HepG2 (cell line): ENCODE measurements at regions of chr10 and their contacts with region 1.

Region 1: DNA sequence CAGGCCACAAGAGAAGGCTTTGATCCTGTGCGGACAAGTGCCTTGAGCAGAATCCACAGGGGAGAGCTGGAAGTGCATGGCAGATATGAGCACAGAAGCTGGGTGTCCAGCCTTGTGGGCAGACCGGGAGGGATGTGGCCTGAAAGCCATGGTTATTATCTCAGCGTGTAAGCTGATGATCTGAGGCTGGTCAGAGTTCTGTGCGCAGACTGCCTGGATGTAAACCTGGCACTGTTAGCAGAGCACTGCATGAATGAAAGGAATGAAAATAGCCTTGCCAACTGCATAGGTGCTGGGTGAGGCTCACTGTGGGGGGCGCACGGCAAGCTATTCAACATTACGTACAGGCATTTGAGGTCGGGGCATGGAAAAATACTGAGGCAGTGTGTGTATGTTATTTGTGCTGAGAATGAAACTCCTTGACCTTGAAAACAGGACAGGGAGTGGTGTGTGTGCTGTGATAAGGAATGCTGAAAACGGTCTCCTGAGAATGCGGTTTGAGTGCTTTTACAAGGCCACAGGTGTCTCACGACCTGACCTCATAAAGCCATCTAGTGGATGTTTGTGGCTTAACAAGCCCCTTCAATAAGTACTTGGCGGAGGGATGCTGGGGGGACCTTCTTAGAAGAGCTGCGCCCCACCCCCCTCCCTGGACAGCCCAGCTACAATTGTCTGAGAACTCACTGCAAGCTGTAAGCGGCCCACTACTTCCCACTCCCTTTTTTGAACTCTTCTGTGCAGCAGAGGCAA is 18.7 kb downstream of the AKR1C1 start:
- DNase-seq: peak; percentile 79
- ATAC-seq: peak; percentile 38
- H3K4me3 ChIP-seq: no peak overlapping the region
- H3K27ac ChIP-seq: peak overlapping the region; percentile 52
- H3K4me1 ChIP-seq: peaks cover 15% of the 10 kb centered on the region
- H3K27me3 ChIP-seq: no peaks in the 10 kb centered on the region
- CTCF ChIP-seq: peak; percentile 78
- EP300 ChIP-seq: peak in 1 of 2 experiments; percentile 23; a peak in 1 of 4 replicates
- POLR2A ChIP-seq: peak; percentile 67 to 88
- RAD21 ChIP-seq: peak; percentile 58; the same call in 1 of the 2 replicates

Region 2: GRCh38 chr10:4813023-4813422 is 168.9 kb before region 1 on chr10:
- CTCF ChIA-PET with region 1: interaction called, 10 read pairs
- POLR2A ChIA-PET with region 1: no interaction called
- in situ Hi-C with region 1: no loop called
- intact Hi-C with region 1: no loop called
- DNase-seq: peak; percentile 58
- ATAC-seq: peak; percentile 44; the same call in 2 of the 3 replicates
- H3K4me3 ChIP-seq: no peak overlapping the region
- H3K27ac ChIP-seq: no peak overlapping the region
- H3K4me1 ChIP-seq: peaks cover 33% of the 10 kb centered on the region
- H3K27me3 ChIP-seq: peaks cover 0 to 6% of the 10 kb centered on the region in 2 experiments; a peak in 1 of 5 replicates
- CTCF ChIP-seq: no peak
- EP300 ChIP-seq: no peak
- POLR2A ChIP-seq: no peak
- RAD21 ChIP-seq: no peak

Region 3: DNA sequence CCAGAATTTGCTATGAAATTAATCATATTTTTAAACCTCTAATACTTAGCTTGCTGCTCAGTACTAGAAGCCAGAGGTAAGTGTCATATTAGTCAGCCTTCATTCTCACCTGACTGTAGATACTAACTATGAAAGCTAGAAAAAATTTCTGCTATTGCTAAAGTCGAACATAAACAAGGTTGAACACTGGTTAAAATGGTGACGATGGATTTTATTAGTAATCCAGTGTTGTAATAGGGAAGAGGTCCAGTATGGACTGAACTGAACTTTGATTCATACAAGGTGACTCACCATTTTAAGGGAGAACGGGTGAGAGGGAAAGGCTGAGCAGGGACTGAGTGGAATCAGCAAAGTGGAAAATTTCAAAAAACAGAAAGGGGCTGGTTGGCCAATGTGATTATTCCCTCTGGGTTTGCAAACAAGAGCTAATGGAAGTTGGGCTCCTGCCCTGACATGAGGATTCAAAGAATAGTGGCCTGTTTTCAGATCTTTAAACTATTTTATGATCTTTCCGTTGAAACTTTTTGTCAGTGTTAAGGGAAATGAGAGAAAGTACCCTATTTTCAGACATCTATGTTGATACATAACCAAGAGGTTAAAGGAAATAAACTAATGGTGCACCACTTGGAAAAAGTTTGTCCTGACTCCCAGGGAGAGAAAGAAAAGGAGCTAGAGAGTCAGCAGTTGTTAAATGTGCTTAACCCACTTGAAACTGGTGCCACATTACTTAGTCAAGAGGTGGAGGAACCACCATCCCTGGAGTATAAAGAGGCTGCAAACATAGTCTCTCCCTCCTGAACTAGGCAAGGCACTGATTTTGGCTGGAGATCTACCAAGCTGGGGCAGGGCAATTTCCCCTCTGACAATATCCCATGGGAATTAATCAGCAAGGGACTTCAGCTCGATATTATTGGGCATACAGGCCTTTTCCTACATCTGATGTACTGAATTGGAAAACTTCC is 34.0 kb before region 1 on chr10:
- CTCF ChIA-PET with region 1: no interaction called
- POLR2A ChIA-PET with region 1: interaction called, 18 read pairs
- in situ Hi-C with region 1: no loop called
- intact Hi-C with region 1: no loop called
- DNase-seq: peak; percentile 100
- ATAC-seq: peak; percentile 91
- H3K4me3 ChIP-seq: peak overlapping the region in 2 of 3 experiments; percentile 5 to 36; a peak in 2 of 6 replicates
- H3K27ac ChIP-seq: peak overlapping the region; percentile 99
- H3K4me1 ChIP-seq: peaks cover 93% of the 10 kb centered on the region
- H3K27me3 ChIP-seq: no peaks in the 10 kb centered on the region
- CTCF ChIP-seq: no peak
- EP300 ChIP-seq: peak; percentile 62 to 97; a peak in 3 of 4 replicates
- POLR2A ChIP-seq: peak; percentile 4 to 65; a peak in 2 of 4 replicates
- RAD21 ChIP-seq: no peak

Region 4: DNA sequence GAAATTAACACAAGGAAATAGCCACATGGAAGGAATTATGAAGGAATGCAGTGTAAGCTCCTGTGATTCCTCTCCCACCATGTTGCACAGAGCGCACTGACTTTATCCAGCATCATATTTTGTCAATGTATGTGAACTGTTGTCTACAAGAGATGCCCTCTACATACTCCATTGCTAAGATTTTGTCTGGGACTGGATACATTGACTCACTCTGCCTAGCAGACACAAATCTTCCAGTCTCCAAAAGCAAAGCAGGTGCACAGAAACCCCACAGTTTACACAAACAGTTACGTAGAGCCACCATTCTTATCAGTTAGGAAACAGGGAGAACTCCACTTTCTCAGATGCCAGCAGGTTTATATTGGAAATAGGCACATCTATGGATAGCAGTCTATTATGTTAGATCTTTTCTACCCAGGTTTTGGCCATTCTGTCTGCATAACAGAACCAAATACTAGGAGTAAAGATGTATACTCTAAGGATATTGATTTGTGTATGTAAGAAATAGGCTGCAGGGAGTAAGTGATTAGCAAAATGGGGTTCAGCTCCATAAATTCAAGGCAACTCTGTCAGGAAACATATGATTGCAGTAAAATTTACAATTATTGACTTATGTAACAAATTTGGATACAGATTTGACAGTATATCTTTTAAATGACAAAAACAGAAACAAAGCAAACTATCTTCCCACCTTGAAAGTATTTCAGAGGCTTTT is 20.3 kb after region 1 on chr10:
- CTCF ChIA-PET with region 1: no interaction called
- POLR2A ChIA-PET with region 1: interaction called, 3 read pairs
- in situ Hi-C with region 1: no loop called
- intact Hi-C with region 1: loop called (anchors 1 kb)
- DNase-seq: no peak
- ATAC-seq: no peak
- H3K4me3 ChIP-seq: peak overlapping the region; percentile 39 to 61 (median 55); a peak in 5 of 6 replicates
- H3K27ac ChIP-seq: peak overlapping the region; percentile 34
- H3K4me1 ChIP-seq: 0 out of 2 replicates have a peak, but pooled peaks cover 15% of the 10 kb centered on the region
- H3K27me3 ChIP-seq: no peaks in the 10 kb centered on the region
- CTCF ChIP-seq: no peak
- EP300 ChIP-seq: no peak
- POLR2A ChIP-seq: no peak
- RAD21 ChIP-seq: no peak

Region 5: DNA sequence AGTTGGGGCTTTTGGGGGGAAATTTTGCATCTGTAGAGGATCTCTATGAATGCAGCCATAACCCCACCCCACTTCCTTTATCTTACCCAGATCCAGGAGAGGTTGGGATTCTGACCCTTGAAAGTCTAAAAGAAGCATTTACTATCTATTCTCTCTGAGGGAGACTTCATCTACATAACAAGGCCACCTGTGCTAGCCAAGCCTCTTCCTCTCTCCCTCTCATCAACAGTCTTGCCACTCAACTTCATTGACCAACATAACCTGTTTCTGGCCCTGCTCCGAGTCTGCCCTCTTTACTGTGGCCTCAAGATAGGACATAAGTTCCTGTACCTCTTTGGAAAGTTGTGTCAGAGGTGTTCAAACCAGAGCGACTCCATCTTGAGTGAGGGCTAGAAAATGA is 403.3 kb after region 1 on chr10:
- CTCF ChIA-PET with region 1: no interaction called
- POLR2A ChIA-PET with region 1: no interaction called
- in situ Hi-C with region 1: loop called (anchors 10 kb)
- intact Hi-C with region 1: no loop called
- DNase-seq: no peak
- ATAC-seq: no peak
- H3K4me3 ChIP-seq: no peak overlapping the region
- H3K27ac ChIP-seq: no peak overlapping the region
- H3K4me1 ChIP-seq: no peaks in the 10 kb centered on the region
- H3K27me3 ChIP-seq: no peaks in the 10 kb centered on the region
- CTCF ChIP-seq: no peak
- EP300 ChIP-seq: no peak
- POLR2A ChIP-seq: no peak
- RAD21 ChIP-seq: no peak

Region 6: GRCh38 chr10:5434017-5434753 is 452.3 kb after region 1 on chr10:
- CTCF ChIA-PET with region 1: no interaction called
- POLR2A ChIA-PET with region 1: no interaction called
- in situ Hi-C with region 1: no loop called
- intact Hi-C with region 1: loop called (anchors 10 kb)
- DNase-seq: peak; percentile 41
- ATAC-seq: peak; percentile 66; the same call in 2 of the 3 replicates
- H3K4me3 ChIP-seq: no peak overlapping the region
- H3K27ac ChIP-seq: no peak overlapping the region
- H3K4me1 ChIP-seq: peaks cover 17% of the 10 kb centered on the region
- H3K27me3 ChIP-seq: no peaks in the 10 kb centered on the region
- CTCF ChIP-seq: peak; percentile 74
- EP300 ChIP-seq: no peak
- POLR2A ChIP-seq: no peak
- RAD21 ChIP-seq: peak; percentile 59; the same call in 1 of the 2 replicates